ENCODE measurements at regions of chr10 and their contacts with region 1.

Region 1: GRCh38 chr10:84264611-84265141 is 19.8 kb downstream of the RGR start:
- DNase-seq: peak; percentile 63 to 75
- H3K4me3 ChIP-seq: no peak overlapping the region
- H3K4me3 Mint-ChIP-seq: no peak overlapping the region
- H3K27ac Mint-ChIP-seq: no peak overlapping the region
- H3K4me1 ChIP-seq: no peaks in the 10 kb centered on the region
- H3K4me1 Mint-ChIP-seq: peaks cover 13% of the 10 kb centered on the region
- H3K27me3 ChIP-seq: no peaks in the 10 kb centered on the region; the same call in 1 of the 2 replicates
- H3K27me3 Mint-ChIP-seq: peaks cover 4% of the 10 kb centered on the region
- CTCF ChIP-seq: peak; percentile 94 to 96

Region 2: DNA sequence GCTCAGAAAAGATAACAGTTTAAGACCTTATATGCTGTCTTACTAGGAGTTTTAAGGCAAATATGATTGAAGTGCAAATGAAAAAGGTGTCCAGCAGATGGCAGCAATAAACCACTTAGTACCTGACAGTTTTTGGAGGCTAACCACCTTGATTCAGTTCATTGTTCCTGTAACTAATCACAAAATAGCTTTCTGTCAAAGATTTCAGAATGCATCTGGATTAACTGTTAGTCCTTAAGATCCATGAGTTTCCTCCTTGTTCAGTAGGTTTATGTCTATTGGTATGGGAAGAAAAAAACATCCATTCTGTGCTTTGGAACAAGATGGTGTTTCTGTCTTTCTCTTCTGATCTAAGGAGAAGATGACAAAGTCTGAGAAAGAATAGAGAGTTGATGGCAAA is 110.3 kb after region 1 on chr10:
- CTCF ChIA-PET with region 1: interaction called, 3 read pairs
- POLR2A ChIA-PET with region 1: no interaction called
- intact Hi-C with region 1: loop called (anchors 1 kb)
- DNase-seq: peak in 1 of 2 experiments; percentile 64
- H3K4me3 ChIP-seq: no peak overlapping the region
- H3K4me3 Mint-ChIP-seq: no peak overlapping the region
- H3K27ac Mint-ChIP-seq: no peak overlapping the region
- H3K4me1 ChIP-seq: peaks cover 4% of the 10 kb centered on the region; the same call in 1 of the 2 replicates
- H3K4me1 Mint-ChIP-seq: no peaks in the 10 kb centered on the region
- H3K27me3 ChIP-seq: no peaks in the 10 kb centered on the region
- H3K27me3 Mint-ChIP-seq: no peaks in the 10 kb centered on the region
- CTCF ChIP-seq: peak; percentile 61 to 75

Region 3: DNA sequence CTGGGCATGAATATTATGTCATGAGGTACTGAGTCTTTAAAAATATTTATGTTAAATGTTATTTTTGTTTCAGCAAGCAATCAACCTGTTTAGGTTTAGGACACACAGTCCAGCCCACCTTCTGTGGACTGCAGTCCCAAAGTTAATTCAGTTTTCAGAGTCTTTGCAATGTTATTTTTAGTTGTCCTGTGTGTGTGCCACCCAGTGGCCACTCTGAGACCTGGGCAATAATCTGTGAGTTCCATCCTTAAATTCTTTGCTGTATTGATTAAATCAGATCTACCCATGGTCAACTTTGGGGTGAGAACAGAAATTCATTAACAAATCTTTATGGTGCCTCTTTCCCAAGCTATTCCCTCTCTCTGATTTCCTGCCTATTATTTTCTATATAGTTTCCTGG is 478.8 kb after region 1 on chr10:
- CTCF ChIA-PET with region 1: no interaction called
- POLR2A ChIA-PET with region 1: no interaction called
- intact Hi-C with region 1: loop called (anchors 10 kb)
- DNase-seq: peak in 1 of 2 experiments; percentile 10
- H3K4me3 ChIP-seq: no peak overlapping the region
- H3K4me3 Mint-ChIP-seq: no peak overlapping the region
- H3K27ac Mint-ChIP-seq: no peak overlapping the region
- H3K4me1 ChIP-seq: no peaks in the 10 kb centered on the region
- H3K4me1 Mint-ChIP-seq: peaks cover 7% of the 10 kb centered on the region
- H3K27me3 ChIP-seq: no peaks in the 10 kb centered on the region
- H3K27me3 Mint-ChIP-seq: peaks cover 8% of the 10 kb centered on the region
- CTCF ChIP-seq: peak; percentile 69 to 71